ENCODE measurements at regions of chr12 and their contacts with region 1.

Region 1: GRCh38 chr12:53159195-53159839 is 21.2 kb upstream of the ZNF740 start:
- DNase-seq: peak; percentile 93
- H3K4me3 Mint-ChIP-seq: no peak overlapping the region
- H3K27ac Mint-ChIP-seq: peak overlapping the region; percentile 21
- H3K4me1 Mint-ChIP-seq: peaks cover 12% of the 10 kb centered on the region
- H3K27me3 Mint-ChIP-seq: no peaks in the 10 kb centered on the region

Region 2: DNA sequence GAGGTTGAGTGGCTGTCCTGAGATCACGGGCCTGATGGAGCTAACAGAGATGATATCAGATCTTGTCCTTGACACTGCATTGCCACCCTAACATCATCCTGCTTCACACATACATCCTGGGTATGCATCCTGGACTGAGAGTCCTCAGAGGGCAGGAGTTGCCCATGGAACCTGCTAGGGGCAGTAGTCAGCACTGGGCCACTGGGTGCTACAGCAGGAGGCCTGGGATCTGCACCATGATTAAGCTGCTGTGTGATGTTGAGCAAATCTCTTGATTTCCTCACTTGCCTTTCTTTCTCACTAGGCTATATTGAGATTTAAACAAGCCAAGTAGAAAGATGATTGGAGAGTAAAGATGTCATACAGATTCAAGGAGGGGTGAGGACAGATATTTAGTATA is 175.2 kb before region 1 on chr12:
- CTCF ChIA-PET with region 1: no interaction called
- POLR2A ChIA-PET with region 1: no interaction called
- DNase-seq: no peak
- H3K4me3 Mint-ChIP-seq: no peak overlapping the region
- H3K27ac Mint-ChIP-seq: no peak overlapping the region
- H3K4me1 Mint-ChIP-seq: peaks cover 2% of the 10 kb centered on the region
- H3K27me3 Mint-ChIP-seq: peaks cover 14% of the 10 kb centered on the region

Region 3: DNA sequence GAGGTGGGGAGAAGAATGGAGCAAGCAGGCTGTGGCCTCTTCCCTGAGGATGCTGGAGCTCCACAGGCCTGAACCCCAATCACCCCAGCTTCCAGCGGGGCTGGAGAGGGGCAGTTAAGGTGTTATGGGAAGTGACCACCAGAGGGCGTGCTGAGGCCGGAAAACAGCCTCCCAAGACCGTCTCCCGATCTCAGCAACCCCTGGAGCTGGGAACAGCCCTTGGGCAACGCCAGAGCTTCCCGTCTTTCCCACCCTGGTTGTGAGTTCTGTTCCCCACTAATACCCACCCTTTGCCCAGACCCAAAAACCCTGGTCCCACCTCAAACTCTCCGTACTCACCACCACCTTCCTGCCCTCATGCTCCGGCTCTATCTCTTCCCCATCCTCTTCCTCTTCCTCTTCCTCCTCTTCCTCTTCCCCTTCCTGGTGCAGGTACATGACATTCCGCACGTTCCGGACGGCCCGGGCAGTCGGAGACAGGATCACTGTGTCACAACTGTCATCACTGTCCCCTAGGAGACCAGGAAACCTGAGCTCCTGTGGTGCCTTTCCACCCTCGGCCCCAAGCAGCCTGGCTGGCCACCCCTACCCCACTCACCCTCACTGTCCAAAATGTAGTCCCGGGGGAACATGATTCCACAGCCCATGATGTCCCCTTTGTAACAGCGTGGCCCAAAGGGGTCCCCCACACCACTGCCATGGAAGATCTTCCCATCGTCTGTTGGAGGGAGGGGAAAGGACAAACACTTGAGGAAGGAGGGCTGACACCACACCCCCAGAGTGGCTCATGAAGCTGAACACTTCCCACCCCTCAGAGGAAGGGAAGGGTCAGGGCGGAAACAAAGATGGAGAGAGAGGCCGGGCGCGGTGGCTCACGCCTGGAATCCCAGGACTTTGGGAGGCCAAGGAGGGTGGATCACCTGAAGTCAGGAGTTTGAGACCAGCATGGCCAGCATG is 93.1 kb before region 1 on chr12:
- CTCF ChIA-PET with region 1: interaction called, 13 read pairs
- POLR2A ChIA-PET with region 1: no interaction called
- DNase-seq: peak; percentile 73
- H3K4me3 Mint-ChIP-seq: no peak overlapping the region
- H3K27ac Mint-ChIP-seq: no peak overlapping the region
- H3K4me1 Mint-ChIP-seq: peaks cover 9% of the 10 kb centered on the region
- H3K27me3 Mint-ChIP-seq: no peaks in the 10 kb centered on the region

Region 4: DNA sequence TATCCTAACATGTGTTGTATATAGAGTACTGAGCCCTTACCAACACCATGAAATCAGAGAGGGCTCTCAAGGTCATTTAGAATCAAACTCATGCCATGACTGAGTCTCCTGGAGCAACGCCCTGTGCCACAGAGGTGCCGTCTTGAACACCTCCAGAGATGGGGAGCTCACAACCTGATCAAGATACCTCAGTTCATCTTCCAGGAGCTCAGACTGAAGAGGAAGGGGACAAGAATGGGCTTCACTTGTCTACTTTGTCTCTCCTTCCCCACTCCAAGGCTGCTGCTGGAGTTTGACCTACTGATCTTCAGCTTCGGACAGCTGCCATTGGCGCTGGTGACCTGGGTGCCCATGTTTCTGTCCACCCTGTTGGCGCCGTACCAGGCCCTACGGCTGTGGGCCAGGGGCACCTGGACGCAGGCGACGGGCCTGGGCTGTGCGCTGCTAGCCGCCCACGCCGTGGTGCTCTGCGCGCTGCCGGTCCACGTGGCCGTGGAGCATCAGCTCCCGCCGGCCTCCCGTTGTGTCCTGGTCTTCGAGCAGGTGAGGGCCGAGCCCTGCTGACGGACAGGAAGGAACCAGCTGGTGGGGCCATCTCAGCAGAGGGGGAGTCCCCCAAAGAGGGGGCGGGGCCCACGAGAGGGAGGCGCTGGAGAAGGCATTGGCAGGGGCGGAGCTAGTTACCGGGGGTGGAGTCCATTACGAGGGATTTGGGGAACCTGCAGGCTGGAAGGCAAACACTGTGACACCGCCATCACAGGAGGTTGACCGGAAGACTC is 44.0 kb before region 1 on chr12:
- CTCF ChIA-PET with region 1: no interaction called
- POLR2A ChIA-PET with region 1: no interaction called
- DNase-seq: no peak
- H3K4me3 Mint-ChIP-seq: no peak overlapping the region
- H3K27ac Mint-ChIP-seq: no peak overlapping the region
- H3K4me1 Mint-ChIP-seq: no peaks in the 10 kb centered on the region
- H3K27me3 Mint-ChIP-seq: no peaks in the 10 kb centered on the region

Region 5: DNA sequence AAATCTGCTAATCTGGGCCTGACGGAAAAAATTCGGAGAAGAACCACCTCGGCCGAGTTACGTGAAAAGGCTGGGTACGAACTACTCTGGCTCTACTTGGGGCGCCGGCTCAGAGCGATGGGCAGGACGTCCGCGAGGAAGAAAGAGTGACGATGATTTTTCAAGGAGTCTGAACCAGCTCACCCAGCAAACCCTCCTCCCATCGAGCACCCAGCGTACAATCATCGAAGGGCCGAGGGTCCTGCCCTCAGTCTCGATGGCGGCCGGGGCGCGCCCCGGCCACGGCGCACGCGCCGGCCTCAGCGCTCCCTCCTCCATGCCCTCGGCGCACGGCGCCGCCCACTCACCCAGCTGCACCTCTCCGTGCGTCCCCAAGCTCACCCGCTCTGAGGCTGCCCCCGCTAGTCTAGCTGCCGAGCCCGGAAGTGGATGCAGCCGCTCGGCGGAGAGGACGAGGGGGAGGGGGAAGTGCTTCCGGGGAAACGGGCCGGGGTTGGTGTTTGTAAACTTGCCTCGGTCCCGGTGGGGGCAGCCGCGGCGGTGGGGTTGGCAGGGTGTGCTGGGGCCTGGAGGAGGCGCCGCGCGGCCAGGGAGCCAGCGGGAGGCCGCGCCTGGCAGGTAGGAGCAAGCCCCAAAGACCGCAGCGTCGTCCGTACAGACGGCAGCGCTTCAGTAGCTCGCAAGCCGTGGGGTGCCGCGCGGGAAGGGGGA is 21.1 kb after region 1 on chr12 and contains the starts of genes CSAD and ZNF740:
- CTCF ChIA-PET with region 1: interaction called, 36 read pairs
- POLR2A ChIA-PET with region 1: interaction called, 33 read pairs
- DNase-seq: peak; percentile 98
- H3K4me3 Mint-ChIP-seq: peak within 1 kb of the TSS; percentile 84
- H3K27ac Mint-ChIP-seq: peak within 1 kb of the TSS; percentile 93
- H3K4me1 Mint-ChIP-seq: peaks cover 58% of the 10 kb centered on the region
- H3K27me3 Mint-ChIP-seq: no peaks in the 10 kb centered on the region
- total RNA-seq, gene CSAD: 28.6 to 31.0 TPM
- total RNA-seq, gene ZNF740: 33.7 to 45.5 TPM

Region 6: DNA sequence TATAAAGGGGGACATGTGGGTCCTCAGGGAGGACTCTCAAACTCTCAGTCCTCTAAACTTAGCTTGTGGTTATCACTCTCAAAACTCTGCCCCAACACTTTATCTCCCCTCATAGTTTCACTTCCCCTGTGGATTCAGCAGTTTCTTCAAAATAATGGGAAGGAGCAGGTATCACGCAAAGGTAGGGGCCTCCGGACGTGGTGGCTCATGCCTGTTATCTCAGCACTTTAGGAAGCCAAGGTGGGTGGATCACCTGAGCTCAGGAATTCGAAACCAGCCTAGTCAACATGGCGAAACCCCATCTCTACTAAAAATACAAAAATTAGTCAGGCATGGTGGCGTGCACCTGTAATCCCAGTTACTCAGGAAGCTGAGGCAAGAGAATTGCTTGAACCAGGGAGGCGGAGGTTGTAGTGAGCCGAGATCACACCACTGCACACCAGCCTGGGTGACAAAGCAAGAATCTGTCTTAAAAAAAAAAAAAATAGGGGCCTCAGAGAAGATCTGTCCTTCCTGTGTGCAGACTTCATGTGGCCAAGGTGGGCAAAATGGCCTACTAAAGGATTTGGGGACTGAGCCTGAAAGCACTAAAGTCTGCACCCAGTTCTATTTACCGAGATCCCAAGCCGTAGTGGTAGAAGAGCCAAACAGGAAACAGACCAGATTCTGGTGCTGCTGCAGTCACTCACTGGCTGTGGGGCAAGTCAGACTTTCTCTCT is 41.3 kb after region 1 on chr12:
- CTCF ChIA-PET with region 1: interaction called, 18 read pairs
- POLR2A ChIA-PET with region 1: interaction called, 16 read pairs
- DNase-seq: peak; percentile 47
- H3K4me3 Mint-ChIP-seq: peak overlapping the region; percentile 66
- H3K27ac Mint-ChIP-seq: peak overlapping the region; percentile 84
- H3K4me1 Mint-ChIP-seq: peaks cover 84% of the 10 kb centered on the region
- H3K27me3 Mint-ChIP-seq: no peaks in the 10 kb centered on the region

Region 7: GRCh38 chr12:53213348-53213747 is 54.0 kb after region 1 on chr12:
- CTCF ChIA-PET with region 1: interaction called, 17 read pairs
- POLR2A ChIA-PET with region 1: interaction called, 5 read pairs
- DNase-seq: peak; percentile 84
- H3K4me3 Mint-ChIP-seq: no peak overlapping the region
- H3K27ac Mint-ChIP-seq: peak overlapping the region; percentile 55
- H3K4me1 Mint-ChIP-seq: peaks cover 91% of the 10 kb centered on the region
- H3K27me3 Mint-ChIP-seq: no peaks in the 10 kb centered on the region

Region 8: GRCh38 chr12:53267999-53268647 is 108.8 kb after region 1 on chr12 and contains the start of gene ESPL1:
- CTCF ChIA-PET with region 1: interaction called, 19 read pairs
- POLR2A ChIA-PET with region 1: interaction called, 8 read pairs
- DNase-seq: peak; percentile 87
- H3K4me3 Mint-ChIP-seq: peak within 1 kb of the TSS; percentile 98
- H3K27ac Mint-ChIP-seq: peak within 1 kb of the TSS; percentile 90
- H3K4me1 Mint-ChIP-seq: peaks cover 53% of the 10 kb centered on the region
- H3K27me3 Mint-ChIP-seq: no peaks in the 10 kb centered on the region
- total RNA-seq, gene ESPL1: 88.4 to 90.2 TPM

Region 9: GRCh38 chr12:53295070-53295890 is 136.0 kb after region 1 on chr12 and contains the start of gene PFDN5:
- CTCF ChIA-PET with region 1: interaction called, 18 read pairs
- POLR2A ChIA-PET with region 1: interaction called, 6 read pairs
- DNase-seq: peak; percentile 90
- H3K4me3 Mint-ChIP-seq: peak within 1 kb of the TSS; percentile 97
- H3K27ac Mint-ChIP-seq: peak within 1 kb of the TSS; percentile 88
- H3K4me1 Mint-ChIP-seq: peaks cover 53% of the 10 kb centered on the region
- H3K27me3 Mint-ChIP-seq: no peaks in the 10 kb centered on the region
- total RNA-seq, gene PFDN5: 300 to 301 TPM

Region 10: GRCh38 chr12:53365245-53365904 is 206.1 kb after region 1 on chr12:
- CTCF ChIA-PET with region 1: no interaction called
- POLR2A ChIA-PET with region 1: no interaction called
- DNase-seq: no peak
- H3K4me3 Mint-ChIP-seq: no peak overlapping the region
- H3K27ac Mint-ChIP-seq: peak overlapping the region; percentile 35
- H3K4me1 Mint-ChIP-seq: peaks cover 17% of the 10 kb centered on the region
- H3K27me3 Mint-ChIP-seq: no peaks in the 10 kb centered on the region